ENCODE measurements at regions of chrX and their contacts with region 1.

Region 1: DNA sequence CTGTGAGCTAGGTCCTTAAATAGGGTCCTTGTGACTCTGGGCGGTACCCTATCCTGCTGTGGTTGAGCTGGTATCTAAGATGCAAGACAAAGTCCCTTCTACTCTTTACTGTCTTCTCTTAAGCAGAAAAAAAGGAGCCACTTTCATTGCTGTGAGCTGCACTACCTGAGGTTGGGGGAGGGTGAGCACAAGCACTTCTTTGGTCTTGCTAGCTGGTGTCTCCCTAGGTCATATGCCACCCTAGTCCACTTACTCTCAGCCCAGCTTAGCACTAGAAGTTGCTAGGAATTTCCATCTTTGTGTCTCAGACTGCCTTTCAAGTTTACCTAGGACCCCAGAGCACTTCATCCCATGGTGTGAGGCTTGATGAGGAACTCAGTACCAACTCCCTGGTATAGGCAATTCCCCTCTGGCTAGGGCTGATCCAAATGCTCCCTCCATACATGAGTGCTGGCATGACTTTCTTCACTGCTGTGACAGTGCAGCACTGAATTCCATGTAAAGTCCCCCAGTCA is 343.6 kb upstream of the CT83 start:
- DNase-seq: no peak

Region 2: GRCh38 chrX:115018037-115018647 is 1788.2 kb before region 1 on chrX:
- intact Hi-C with region 1: loop called in 1 of 2 experiments (anchors 10 kb)
- DNase-seq: no peak

Region 3: DNA sequence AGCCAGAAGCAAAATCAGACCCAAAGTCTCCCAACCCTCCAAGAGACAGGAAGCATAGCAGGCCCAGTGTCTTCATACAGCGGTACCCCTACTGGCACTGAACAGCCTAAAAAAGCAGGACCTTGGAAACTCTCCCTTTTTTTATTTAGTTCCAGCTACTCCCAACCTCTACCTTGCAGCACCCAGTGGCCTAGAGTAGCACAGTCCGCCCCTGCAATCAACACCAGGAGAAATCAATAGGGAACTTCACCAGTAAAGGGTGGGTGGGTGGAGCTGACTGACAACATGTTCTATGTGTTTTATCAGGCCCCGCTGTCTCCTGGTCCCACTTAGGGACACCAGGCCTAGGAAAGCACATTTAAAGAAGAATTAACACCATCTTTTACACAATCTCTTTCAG is 34.9 kb after region 1 on chrX:
- intact Hi-C with region 1: loop called in 1 of 2 experiments (anchors 2 kb)
- DNase-seq: no peak

Measured in posterior vena cava (tissue), 2 donors.